ENCODE measurements at regions of chr4 and their contacts with region 1.

Region 1: GRCh38 chr4:3106339-3107186 is 32.1 kb downstream of the HTT start:
- DNase-seq: peak; percentile 86
- ATAC-seq: peak; percentile 99
- H3K4me3 ChIP-seq: no peak overlapping the region
- H3K4me3 Mint-ChIP-seq: no peak overlapping the region
- H3K27ac ChIP-seq: no peak overlapping the region
- H3K27ac Mint-ChIP-seq: peak overlapping the region; percentile 82
- H3K4me1 ChIP-seq: peaks cover 0 to 6% of the 10 kb centered on the region in 2 donors
- H3K4me1 Mint-ChIP-seq: peaks cover 8% of the 10 kb centered on the region
- H3K27me3 ChIP-seq: no peaks in the 10 kb centered on the region
- H3K27me3 Mint-ChIP-seq: no peaks in the 10 kb centered on the region
- CTCF ChIP-seq: peak; percentile 96

Region 2: DNA sequence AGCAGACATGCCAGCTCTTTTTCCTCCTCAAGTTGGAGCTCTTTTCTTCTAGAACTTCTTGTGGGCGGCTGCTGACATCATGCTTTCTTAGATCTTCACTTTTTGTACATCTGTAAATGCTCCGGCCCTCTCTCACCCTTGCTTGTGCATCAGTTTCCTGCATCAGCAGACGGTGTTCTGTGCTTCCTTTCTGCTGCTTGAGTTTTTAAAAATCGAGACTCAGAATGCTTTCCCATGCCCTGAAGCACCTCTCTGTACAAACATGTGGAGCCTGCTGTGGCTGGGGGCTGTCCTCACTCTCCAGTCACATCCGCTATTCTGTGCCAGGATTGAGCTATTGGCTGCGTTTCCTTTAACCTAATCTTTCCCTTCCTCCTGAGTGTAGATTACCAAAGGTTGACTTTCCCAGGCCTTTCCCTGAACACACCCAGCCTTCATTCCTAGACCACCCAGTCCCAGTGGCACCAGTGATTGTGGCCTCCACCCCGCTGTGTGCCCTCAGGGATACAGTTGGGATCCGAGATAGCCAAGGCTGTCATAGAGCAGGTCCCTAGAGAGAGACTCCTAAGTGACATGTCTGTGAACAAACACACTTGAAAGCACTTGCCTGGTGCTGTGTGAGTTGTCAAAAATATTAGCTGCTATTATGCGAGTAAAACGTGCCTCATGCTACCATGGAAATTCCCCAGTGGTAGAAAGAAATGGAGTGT is 392.3 kb before region 1 on chr4:
- CTCF ChIA-PET with region 1: no interaction called
- POLR2A ChIA-PET with region 1: no interaction called
- intact Hi-C with region 1: no loop called
- DNase-seq: no peak
- ATAC-seq: no peak
- H3K4me3 ChIP-seq: no peak overlapping the region
- H3K4me3 Mint-ChIP-seq: no peak overlapping the region
- H3K27ac ChIP-seq: no peak overlapping the region
- H3K27ac Mint-ChIP-seq: peak overlapping the region; percentile 22
- H3K4me1 ChIP-seq: peaks cover 5 to 10% of the 10 kb centered on the region in 2 donors
- H3K4me1 Mint-ChIP-seq: peaks cover 20% of the 10 kb centered on the region
- H3K27me3 ChIP-seq: no peaks in the 10 kb centered on the region
- H3K27me3 Mint-ChIP-seq: no peaks in the 10 kb centered on the region
- CTCF ChIP-seq: no peak

Region 3: GRCh38 chr4:3069661-3070199 is 36.8 kb before region 1 on chr4:
- CTCF ChIA-PET with region 1: no interaction called
- POLR2A ChIA-PET with region 1: no interaction called
- intact Hi-C with region 1: no loop called
- DNase-seq: no peak
- ATAC-seq: no peak
- H3K4me3 ChIP-seq: no peak overlapping the region
- H3K4me3 Mint-ChIP-seq: no peak overlapping the region
- H3K27ac ChIP-seq: no peak overlapping the region
- H3K27ac Mint-ChIP-seq: no peak overlapping the region
- H3K4me1 ChIP-seq: peaks cover 5 to 9% of the 10 kb centered on the region in 2 donors
- H3K4me1 Mint-ChIP-seq: peaks cover 3% of the 10 kb centered on the region
- H3K27me3 ChIP-seq: no peaks in the 10 kb centered on the region
- H3K27me3 Mint-ChIP-seq: no peaks in the 10 kb centered on the region
- CTCF ChIP-seq: no peak

Region 4: DNA sequence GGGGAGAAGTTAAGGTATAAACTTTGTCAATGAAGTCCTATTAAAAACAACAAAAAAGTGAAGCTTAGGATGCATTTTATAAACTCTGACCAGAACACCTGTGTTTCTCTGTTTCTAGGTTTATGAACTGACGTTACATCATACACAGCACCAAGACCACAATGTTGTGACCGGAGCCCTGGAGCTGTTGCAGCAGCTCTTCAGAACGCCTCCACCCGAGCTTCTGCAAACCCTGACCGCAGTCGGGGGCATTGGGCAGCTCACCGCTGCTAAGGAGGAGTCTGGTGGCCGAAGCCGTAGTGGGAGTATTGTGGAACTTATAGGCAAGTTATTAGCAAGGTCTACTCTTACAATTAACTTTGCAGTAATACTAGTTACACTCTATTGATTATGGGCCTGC is 14.5 kb after region 1 on chr4:
- CTCF ChIA-PET with region 1: interaction called, 16 read pairs
- POLR2A ChIA-PET with region 1: no interaction called
- intact Hi-C with region 1: no loop called
- DNase-seq: no peak
- ATAC-seq: no peak
- H3K4me3 ChIP-seq: no peak overlapping the region
- H3K4me3 Mint-ChIP-seq: no peak overlapping the region
- H3K27ac ChIP-seq: no peak overlapping the region
- H3K27ac Mint-ChIP-seq: no peak overlapping the region
- H3K4me1 ChIP-seq: no peaks in the 10 kb centered on the region
- H3K4me1 Mint-ChIP-seq: no peaks in the 10 kb centered on the region
- H3K27me3 ChIP-seq: no peaks in the 10 kb centered on the region
- H3K27me3 Mint-ChIP-seq: no peaks in the 10 kb centered on the region
- CTCF ChIP-seq: no peak

Region 5: DNA sequence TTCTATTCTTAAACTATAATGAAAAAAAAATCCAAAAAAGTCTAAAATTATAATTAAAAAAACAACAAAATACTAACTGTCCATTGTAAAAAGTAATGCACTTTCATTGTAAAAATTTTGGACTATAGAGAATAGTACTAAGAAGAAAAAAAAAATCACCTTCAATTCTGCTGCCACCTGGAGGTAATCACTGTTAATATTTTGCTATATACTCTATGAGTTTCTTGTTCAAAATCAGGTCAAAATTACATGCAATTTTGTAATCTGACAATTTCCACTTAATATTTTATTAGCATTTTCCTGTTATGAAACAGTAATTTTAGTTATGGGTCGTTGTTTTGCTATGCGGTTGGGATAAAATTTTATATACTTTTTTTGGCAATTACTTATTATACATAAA is 29.9 kb after region 1 on chr4:
- CTCF ChIA-PET with region 1: interaction called, 14 read pairs
- POLR2A ChIA-PET with region 1: no interaction called
- intact Hi-C with region 1: no loop called
- DNase-seq: no peak
- ATAC-seq: no peak
- H3K4me3 ChIP-seq: no peak overlapping the region
- H3K4me3 Mint-ChIP-seq: no peak overlapping the region
- H3K27ac ChIP-seq: no peak overlapping the region
- H3K27ac Mint-ChIP-seq: no peak overlapping the region
- H3K4me1 ChIP-seq: no peaks in the 10 kb centered on the region
- H3K4me1 Mint-ChIP-seq: no peaks in the 10 kb centered on the region
- H3K27me3 ChIP-seq: no peaks in the 10 kb centered on the region
- H3K27me3 Mint-ChIP-seq: no peaks in the 10 kb centered on the region
- CTCF ChIP-seq: peak; percentile 66